GM12878 (cell line): ENCODE measurements at regions of chr5 and their contacts with region 1.

Region 1: GRCh38 chr5:14208071-14209021 is 65.2 kb downstream of the TRIO start:
- DNase-seq: peak; percentile 86
- ATAC-seq: peak; percentile 75
- H3K4me3 ChIP-seq: peak overlapping the region; percentile 61
- H3K27ac ChIP-seq: peak overlapping the region; percentile 94
- H3K4me1 ChIP-seq: peaks cover 62% of the 10 kb centered on the region
- H3K27me3 ChIP-seq: no peaks in the 10 kb centered on the region
- CTCF ChIP-seq: peak in 2 of 3 experiments; percentile 39 to 42; a peak in 4 of 6 replicates
- EP300 ChIP-seq: peak; percentile 21 to 41; a peak in 2 of 4 replicates
- POLR2A ChIP-seq: no peak
- RAD21 ChIP-seq: peak; percentile 72

Region 2: DNA sequence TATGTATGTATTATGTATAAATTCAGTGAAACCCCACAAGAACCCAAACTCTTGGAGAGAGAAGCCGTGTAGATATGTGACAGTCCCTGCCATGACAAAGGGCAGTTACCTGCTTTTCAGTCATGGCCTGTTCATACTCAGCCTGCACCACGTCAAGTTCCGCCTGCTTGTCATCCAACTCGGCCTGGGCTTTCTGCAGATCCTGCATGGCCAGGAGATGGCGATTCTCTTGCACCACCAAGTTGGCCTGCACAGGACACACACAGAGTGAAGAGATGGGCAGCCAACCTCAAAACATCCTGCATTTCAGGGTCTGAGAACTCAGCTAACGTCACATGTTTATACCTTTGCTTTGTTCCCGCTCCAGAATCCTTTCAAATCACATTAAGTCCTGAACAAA is 449.6 kb before region 1 on chr5:
- CTCF ChIA-PET with region 1: no interaction called
- POLR2A ChIA-PET with region 1: no interaction called
- RAD21 ChIA-PET with region 1: no interaction called
- SMC1A ChIA-PET with region 1: no interaction called
- in situ Hi-C with region 1: no loop called
- intact Hi-C with region 1: no loop called
- DNase-seq: no peak
- ATAC-seq: no peak
- H3K4me3 ChIP-seq: no peak overlapping the region
- H3K27ac ChIP-seq: no peak overlapping the region
- H3K4me1 ChIP-seq: no peaks in the 10 kb centered on the region
- H3K27me3 ChIP-seq: no peaks in the 10 kb centered on the region
- CTCF ChIP-seq: no peak
- EP300 ChIP-seq: no peak
- POLR2A ChIP-seq: no peak
- RAD21 ChIP-seq: no peak

Region 3: GRCh38 chr5:14011089-14012004 is 197.0 kb before region 1 on chr5:
- CTCF ChIA-PET with region 1: interaction called, 3 read pairs
- POLR2A ChIA-PET with region 1: no interaction called
- RAD21 ChIA-PET with region 1: no interaction called
- SMC1A ChIA-PET with region 1: interaction called, 3 read pairs
- in situ Hi-C with region 1: no loop called
- intact Hi-C with region 1: loop called (anchors 5 kb)
- DNase-seq: no peak
- ATAC-seq: peak; percentile 97
- H3K4me3 ChIP-seq: peak overlapping the region; percentile 70
- H3K27ac ChIP-seq: no peak overlapping the region
- H3K4me1 ChIP-seq: peaks cover 8% of the 10 kb centered on the region; the same call in 1 of the 2 replicates
- H3K27me3 ChIP-seq: no peaks in the 10 kb centered on the region
- CTCF ChIP-seq: no peak
- EP300 ChIP-seq: no peak
- POLR2A ChIP-seq: 0 out of 2 replicates have a peak, but pooled peaks have one; percentile 30
- RAD21 ChIP-seq: no peak

Region 4: DNA sequence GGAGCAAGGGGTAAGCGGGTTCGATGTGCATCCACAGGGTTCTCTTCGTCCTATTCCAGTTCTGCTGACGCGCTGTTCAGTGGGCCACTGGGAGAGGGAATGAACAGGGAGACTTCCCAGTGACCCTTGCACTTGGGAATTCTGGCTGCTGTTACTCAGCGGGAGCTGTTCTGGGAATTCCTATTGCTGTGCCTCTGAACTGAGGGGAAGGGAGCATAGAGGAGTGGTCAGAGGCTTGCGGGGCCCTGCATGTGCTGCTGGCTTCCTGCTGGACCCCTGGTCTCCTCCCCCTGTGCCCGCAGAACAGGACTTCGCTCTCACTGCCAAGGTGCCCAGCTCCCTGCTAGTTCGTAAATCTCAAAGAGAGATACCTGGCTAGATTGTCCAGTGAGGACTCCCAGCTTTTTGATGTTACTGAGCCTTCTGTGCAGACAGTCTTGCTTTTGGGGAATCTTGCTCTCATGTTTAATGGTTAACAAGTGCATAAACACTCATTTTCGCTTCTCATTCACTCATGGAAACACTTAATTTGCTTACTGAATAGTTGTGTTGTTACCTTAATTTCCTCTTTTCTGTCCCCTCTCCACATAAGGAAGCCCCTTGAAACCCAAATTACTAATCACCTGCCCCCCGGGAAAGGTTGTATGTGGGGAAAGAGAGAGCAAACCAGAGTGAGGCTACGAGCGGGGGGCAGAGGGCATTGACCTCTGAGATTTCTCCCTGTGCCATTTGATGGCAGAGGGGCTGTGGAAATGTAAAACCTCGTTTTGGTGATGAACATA is 59.3 kb before region 1 on chr5:
- CTCF ChIA-PET with region 1: interaction called, 70 read pairs
- POLR2A ChIA-PET with region 1: interaction called, 347 read pairs
- RAD21 ChIA-PET with region 1: interaction called, 373 read pairs
- SMC1A ChIA-PET with region 1: interaction called, 225 read pairs
- in situ Hi-C with region 1: no loop called
- intact Hi-C with region 1: loop called (anchors 1 kb)
- DNase-seq: no peak
- ATAC-seq: peak; percentile 4
- H3K4me3 ChIP-seq: peak overlapping the region; percentile 52
- H3K27ac ChIP-seq: peak overlapping the region; percentile 66
- H3K4me1 ChIP-seq: peaks cover 57% of the 10 kb centered on the region
- H3K27me3 ChIP-seq: no peaks in the 10 kb centered on the region
- CTCF ChIP-seq: no peak
- EP300 ChIP-seq: peak in 1 of 2 experiments; percentile 28; a peak in 1 of 4 replicates
- POLR2A ChIP-seq: no peak
- RAD21 ChIP-seq: no peak

Region 5: GRCh38 chr5:14174230-14174637 is 34.1 kb before region 1 on chr5:
- CTCF ChIA-PET with region 1: interaction called, 9 read pairs
- POLR2A ChIA-PET with region 1: interaction called, 37 read pairs
- RAD21 ChIA-PET with region 1: interaction called, 82 read pairs
- SMC1A ChIA-PET with region 1: interaction called, 182 read pairs
- in situ Hi-C with region 1: no loop called
- intact Hi-C with region 1: loop called (anchors 1 kb)
- DNase-seq: peak; percentile 63
- ATAC-seq: peak; percentile 52
- H3K4me3 ChIP-seq: peak overlapping the region; percentile 62
- H3K27ac ChIP-seq: peak overlapping the region; percentile 71
- H3K4me1 ChIP-seq: peaks cover 57% of the 10 kb centered on the region
- H3K27me3 ChIP-seq: no peaks in the 10 kb centered on the region
- CTCF ChIP-seq: no peak
- EP300 ChIP-seq: no peak
- POLR2A ChIP-seq: 0 out of 2 replicates have a peak, but pooled peaks have one; percentile 29
- RAD21 ChIP-seq: no peak

Region 6: GRCh38 chr5:14258840-14259239 is 50.5 kb after region 1 on chr5:
- CTCF ChIA-PET with region 1: interaction called, 15 read pairs
- POLR2A ChIA-PET with region 1: interaction called, 64 read pairs
- RAD21 ChIA-PET with region 1: interaction called, 57 read pairs
- SMC1A ChIA-PET with region 1: interaction called, 166 read pairs
- in situ Hi-C with region 1: no loop called
- intact Hi-C with region 1: loop called (anchors 2 kb)
- DNase-seq: no peak
- ATAC-seq: peak; percentile 65
- H3K4me3 ChIP-seq: peak overlapping the region; percentile 56; the same call in 1 of the 2 replicates
- H3K27ac ChIP-seq: peak overlapping the region; percentile 14
- H3K4me1 ChIP-seq: peaks cover 37% of the 10 kb centered on the region
- H3K27me3 ChIP-seq: no peaks in the 10 kb centered on the region
- CTCF ChIP-seq: peak in 2 of 3 experiments; percentile 24 to 33; a peak in 1 of 6 replicates
- EP300 ChIP-seq: no peak
- POLR2A ChIP-seq: no peak
- RAD21 ChIP-seq: no peak

Region 7: GRCh38 chr5:14281746-14282181 is 73.4 kb after region 1 on chr5:
- CTCF ChIA-PET with region 1: interaction called, 5 read pairs
- POLR2A ChIA-PET with region 1: interaction called, 9 read pairs
- RAD21 ChIA-PET with region 1: interaction called, 13 read pairs
- SMC1A ChIA-PET with region 1: interaction called, 17 read pairs
- in situ Hi-C with region 1: no loop called
- intact Hi-C with region 1: no loop called
- DNase-seq: no peak
- ATAC-seq: peak; percentile 88
- H3K4me3 ChIP-seq: no peak overlapping the region
- H3K27ac ChIP-seq: no peak overlapping the region
- H3K4me1 ChIP-seq: peaks cover 14% of the 10 kb centered on the region
- H3K27me3 ChIP-seq: no peaks in the 10 kb centered on the region
- CTCF ChIP-seq: no peak
- EP300 ChIP-seq: peak in 1 of 2 experiments; percentile 47; a peak in 1 of 4 replicates
- POLR2A ChIP-seq: no peak
- RAD21 ChIP-seq: no peak

Region 8: DNA sequence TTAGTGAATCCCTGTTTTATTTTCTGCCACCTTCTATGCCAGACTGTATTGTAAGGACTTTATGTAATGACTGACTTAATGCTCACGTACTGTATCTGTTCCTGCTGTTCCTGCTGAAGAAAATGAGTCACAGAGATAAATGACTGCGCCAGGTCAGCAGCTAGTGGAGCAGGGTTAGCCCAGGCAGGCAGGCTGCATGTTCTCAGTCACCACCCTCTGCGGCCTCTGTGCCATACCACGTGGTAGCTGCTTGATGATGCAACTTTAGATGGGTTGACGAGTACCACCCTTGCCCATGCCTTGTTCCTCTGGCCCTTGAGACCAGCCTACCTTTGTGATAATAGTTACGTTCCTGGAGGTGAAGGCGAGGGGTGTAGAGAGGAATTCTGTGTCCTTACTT is 96.7 kb after region 1 on chr5:
- CTCF ChIA-PET with region 1: no interaction called
- POLR2A ChIA-PET with region 1: no interaction called
- RAD21 ChIA-PET with region 1: no interaction called
- SMC1A ChIA-PET with region 1: no interaction called
- in situ Hi-C with region 1: no loop called
- intact Hi-C with region 1: no loop called
- DNase-seq: no peak
- ATAC-seq: no peak
- H3K4me3 ChIP-seq: no peak overlapping the region
- H3K27ac ChIP-seq: no peak overlapping the region
- H3K4me1 ChIP-seq: no peaks in the 10 kb centered on the region
- H3K27me3 ChIP-seq: no peaks in the 10 kb centered on the region
- CTCF ChIP-seq: no peak
- EP300 ChIP-seq: no peak
- POLR2A ChIP-seq: no peak
- RAD21 ChIP-seq: no peak

Region 9: GRCh38 chr5:15013654-15014463 is 805.5 kb after region 1 on chr5:
- CTCF ChIA-PET with region 1: no interaction called
- POLR2A ChIA-PET with region 1: no interaction called
- RAD21 ChIA-PET with region 1: no interaction called
- SMC1A ChIA-PET with region 1: no interaction called
- in situ Hi-C with region 1: no loop called
- intact Hi-C with region 1: no loop called
- DNase-seq: no peak
- ATAC-seq: peak; percentile 91
- H3K4me3 ChIP-seq: no peak overlapping the region
- H3K27ac ChIP-seq: no peak overlapping the region
- H3K4me1 ChIP-seq: no peaks in the 10 kb centered on the region
- H3K27me3 ChIP-seq: no peaks in the 10 kb centered on the region
- CTCF ChIP-seq: peak; percentile 36 to 64 (median 51); a peak in 5 of 6 replicates
- EP300 ChIP-seq: no peak
- POLR2A ChIP-seq: no peak
- RAD21 ChIP-seq: peak; percentile 64